Esophagus muscularis mucosa (tissue), 4 donors: ENCODE measurements at regions of chr19 and their contacts with region 1.

Region 1: DNA sequence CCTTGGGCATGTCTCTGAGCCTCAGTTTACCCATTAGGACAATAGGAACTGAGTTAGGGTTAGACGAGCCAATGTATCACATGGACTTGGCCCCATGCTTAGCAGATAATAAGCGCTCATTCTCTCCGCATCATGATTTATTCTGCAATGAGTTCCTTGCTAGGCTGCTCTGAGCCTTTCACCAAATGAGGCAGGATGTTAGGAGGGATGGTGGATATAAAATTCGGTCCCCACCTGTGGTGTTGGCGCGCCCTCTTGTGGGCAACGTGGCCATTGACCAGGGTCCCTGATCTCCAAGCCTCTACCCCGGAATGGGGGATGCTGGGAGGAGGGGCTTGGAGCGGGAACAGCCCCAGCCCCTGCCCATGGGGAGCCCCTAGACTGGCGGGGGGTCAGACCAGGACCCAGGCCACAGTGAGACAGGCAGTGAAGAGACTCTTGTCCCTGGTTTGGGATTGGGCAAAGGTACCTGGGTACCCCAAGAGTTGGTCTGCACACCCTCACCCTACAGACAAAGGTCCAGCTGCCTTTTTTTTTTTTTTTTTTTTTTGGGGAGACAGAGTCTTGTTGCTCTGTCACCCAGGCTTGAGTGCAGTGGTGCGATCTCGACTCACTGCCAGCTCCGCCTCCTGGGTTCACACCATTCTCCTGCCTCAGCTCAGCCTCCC is 43.9 kb downstream of the CERS4 start:
- DNase-seq: peak; percentile 95
- H3K4me3 ChIP-seq: no peak overlapping the region
- H3K27ac ChIP-seq: no peak overlapping the region
- H3K4me1 ChIP-seq: peaks cover 12 to 35% (median 29%) of the 10 kb centered on the region in 4 donors
- H3K27me3 ChIP-seq: no peaks in the 10 kb centered on the region
- CTCF ChIP-seq: peak; percentile 91 to 96 (median 95)
- EP300 ChIP-seq: no peak
- POLR2A ChIP-seq: no peak

Region 2: GRCh38 chr19:7943444-7944176 is 309.4 kb before region 1 on chr19 and contains the start of gene TIMM44:
- intact Hi-C with region 1: loop called (anchors 10 kb)
- DNase-seq: peak; percentile 100
- H3K4me3 ChIP-seq: peak within 1 kb of the TSS; percentile 63 to 97 (median 79)
- H3K27ac ChIP-seq: peak within 1 kb of the TSS; percentile 93 to 98 (median 96)
- H3K4me1 ChIP-seq: peaks cover 19 to 55% (median 49%) of the 10 kb centered on the region in 4 donors
- H3K27me3 ChIP-seq: no peaks in the 10 kb centered on the region
- CTCF ChIP-seq: no peak
- EP300 ChIP-seq: no peak
- POLR2A ChIP-seq: peak; percentile 47
- total RNA-seq, gene TIMM44: 61.6 to 111 (median 98.5) TPM

Region 3: GRCh38 chr19:8005534-8006256 is 247.4 kb before region 1 on chr19 and contains the start of gene ELAVL1:
- intact Hi-C with region 1: loop called (anchors 10 kb)
- DNase-seq: peak; percentile 93
- H3K4me3 ChIP-seq: peak within 1 kb of the TSS; percentile 84 to 95 (median 86)
- H3K27ac ChIP-seq: peak within 1 kb of the TSS; percentile 84 to 88 (median 86)
- H3K4me1 ChIP-seq: peaks cover 39 to 56% (median 50%) of the 10 kb centered on the region in 4 donors
- H3K27me3 ChIP-seq: no peaks in the 10 kb centered on the region
- CTCF ChIP-seq: no peak
- EP300 ChIP-seq: no peak
- POLR2A ChIP-seq: no peak
- total RNA-seq, gene ELAVL1: 27.0 to 49.1 (median 38.3) TPM

Region 4: DNA sequence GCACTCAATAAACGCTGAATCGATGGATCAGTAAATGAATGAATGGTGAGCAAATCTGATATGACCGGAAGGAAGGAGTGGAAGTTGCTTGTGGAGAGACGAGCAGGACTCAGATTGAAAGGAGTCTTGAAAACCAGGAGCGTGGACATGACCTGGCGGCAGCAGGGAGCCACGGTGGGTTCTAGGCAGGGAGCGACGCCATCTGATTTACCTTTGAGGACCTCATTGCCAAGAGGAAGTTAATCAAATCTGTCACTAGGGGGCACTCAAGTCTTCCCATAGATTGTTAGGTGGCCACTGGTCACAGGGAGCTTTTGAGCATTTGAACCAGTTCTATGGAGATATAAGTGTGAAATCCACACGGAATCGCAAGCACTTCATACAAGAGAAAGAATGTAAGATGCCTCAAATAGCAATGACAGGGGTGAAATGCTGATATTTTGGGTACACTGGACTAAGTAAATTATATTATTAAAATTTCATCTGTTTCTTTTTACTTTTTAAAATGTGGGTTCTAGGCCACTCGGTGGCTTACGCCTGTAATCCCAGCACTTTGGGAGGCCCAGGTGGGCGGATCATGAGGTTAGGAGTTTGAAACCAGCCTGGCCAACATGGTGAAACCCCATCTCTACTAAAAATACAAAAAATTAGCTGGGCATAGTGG is 94.5 kb before region 1 on chr19:
- intact Hi-C with region 1: loop called (anchors 1 kb)
- DNase-seq: no peak
- H3K4me3 ChIP-seq: no peak overlapping the region
- H3K27ac ChIP-seq: no peak overlapping the region
- H3K4me1 ChIP-seq: peaks cover 9 to 14% (median 12%) of the 10 kb centered on the region in 4 donors
- H3K27me3 ChIP-seq: no peaks in the 10 kb centered on the region
- CTCF ChIP-seq: peak; percentile 48 to 66 (median 59)
- EP300 ChIP-seq: no peak
- POLR2A ChIP-seq: no peak

Region 5: GRCh38 chr19:8208922-8209461 is 44.1 kb before region 1 on chr19 and contains the start of gene CERS4:
- intact Hi-C with region 1: loop called (anchors 2 kb)
- DNase-seq: no peak
- H3K4me3 ChIP-seq: peak within 1 kb of the TSS; percentile 74 to 98 (median 87)
- H3K27ac ChIP-seq: peak within 1 kb of the TSS; percentile 73 to 81 (median 78)
- H3K4me1 ChIP-seq: peaks cover 14 to 33% (median 29%) of the 10 kb centered on the region in 4 donors
- H3K27me3 ChIP-seq: no peaks in the 10 kb centered on the region
- CTCF ChIP-seq: no peak
- EP300 ChIP-seq: no peak
- POLR2A ChIP-seq: no peak
- total RNA-seq, gene CERS4: 21.0 to 51.7 (median 29.2) TPM